ENCODE measurements at regions of chr19 and their contacts with region 1.

Region 1: DNA sequence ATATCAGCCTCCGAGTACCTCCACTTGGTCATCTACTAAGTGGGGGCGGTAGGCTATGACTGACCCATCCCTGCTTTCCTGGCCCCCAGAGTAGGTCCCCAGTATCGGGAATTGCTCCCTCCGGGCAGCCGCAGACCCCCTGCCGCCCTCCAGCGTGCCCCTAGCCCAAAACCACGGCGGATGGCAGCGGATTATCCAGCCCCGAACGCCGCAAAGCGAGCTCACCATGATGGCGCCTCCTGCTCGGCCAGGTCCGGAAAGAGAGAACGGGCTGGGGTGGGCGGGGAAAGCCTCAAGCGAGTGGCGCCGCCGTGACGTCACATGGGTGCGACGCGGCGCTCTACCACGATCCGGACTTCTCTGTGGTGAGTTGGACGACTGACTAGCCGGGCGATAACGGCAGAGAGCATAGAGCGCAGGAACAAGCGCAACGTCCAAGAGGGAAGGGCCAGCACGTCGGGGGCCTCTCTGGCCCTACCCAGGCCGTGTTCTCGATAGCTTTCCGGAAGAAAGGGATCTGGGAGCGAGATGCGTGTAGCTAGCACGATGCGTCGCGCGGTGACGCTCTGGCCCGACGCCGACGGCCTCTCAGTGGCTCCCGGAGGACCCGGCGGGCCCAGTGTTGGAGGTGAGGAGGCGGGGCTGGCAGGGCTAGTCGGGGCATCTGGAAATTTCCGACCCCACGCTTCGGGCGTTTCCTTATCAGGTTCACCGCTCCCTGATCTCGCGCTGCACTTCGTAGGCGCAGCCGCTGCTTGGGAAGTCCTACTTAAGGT is at the starts of genes RPL18 and SPHK2:
- DNase-seq: peak; percentile 99
- ATAC-seq: peak; percentile 78
- H3K4me3 ChIP-seq: peak within 1 kb of the TSS; percentile 56 to 93
- H3K27ac ChIP-seq: peak within 1 kb of the TSS; percentile 86
- H3K4me1 ChIP-seq: peaks cover 38 to 56% of the 10 kb centered on the region in 2 experiments
- H3K27me3 ChIP-seq: no peaks in the 10 kb centered on the region
- CTCF ChIP-seq: no peak
- POLR2A ChIP-seq: peak; percentile 86
- RAD21 ChIP-seq: no peak
- total RNA-seq, gene RPL18: 2,006 TPM
- total RNA-seq, gene SPHK2: 19.9 TPM

Region 2: DNA sequence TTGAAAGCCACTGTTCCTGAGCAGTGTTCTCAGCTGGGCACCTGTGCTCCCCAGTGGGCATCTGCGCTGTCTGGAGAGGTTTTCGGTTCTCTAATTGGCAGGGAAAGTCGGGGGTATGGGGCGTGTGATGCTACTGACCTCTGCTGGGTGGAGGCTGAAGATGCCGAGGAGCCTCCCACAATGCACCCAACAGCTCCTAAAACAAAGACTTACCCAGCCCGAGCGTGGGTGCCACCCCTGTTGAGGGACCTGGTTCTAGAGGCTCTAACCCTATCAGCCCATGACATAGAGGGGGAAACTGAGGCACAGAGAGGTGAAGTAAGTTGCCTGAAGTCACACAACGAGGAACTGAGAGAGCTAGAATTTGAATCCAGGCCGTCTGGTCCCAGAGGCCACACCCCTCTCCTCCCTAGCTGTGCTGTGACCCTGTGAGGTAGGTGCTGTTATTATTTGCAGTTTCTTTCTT is 10.3 kb before region 1 on chr19:
- CTCF ChIA-PET with region 1: interaction called, 9 read pairs
- POLR2A ChIA-PET with region 1: interaction called, 31 read pairs
- RAD21 ChIA-PET with region 1: no interaction called
- intact Hi-C with region 1: no loop called
- DNase-seq: peak; percentile 66
- ATAC-seq: peak; percentile 92
- H3K4me3 ChIP-seq: peak overlapping the region; percentile 22 to 50
- H3K27ac ChIP-seq: peak overlapping the region; percentile 10; the same call in 1 of the 2 replicates
- H3K4me1 ChIP-seq: peaks cover 5 to 13% of the 10 kb centered on the region in 2 experiments; a peak in 3 of 4 replicates
- H3K27me3 ChIP-seq: no peaks in the 10 kb centered on the region
- CTCF ChIP-seq: peak; percentile 77 to 80 (median 77)
- POLR2A ChIP-seq: no peak
- RAD21 ChIP-seq: peak; percentile 92

Region 3: GRCh38 chr19:48630296-48631063 is 11.4 kb after region 1 on chr19:
- CTCF ChIA-PET with region 1: interaction called, 4 read pairs
- POLR2A ChIA-PET with region 1: interaction called, 22 read pairs
- RAD21 ChIA-PET with region 1: interaction called, 3 read pairs
- intact Hi-C with region 1: no loop called
- DNase-seq: no peak
- ATAC-seq: peak; percentile 0; the same call in 1 of the 2 replicates
- H3K4me3 ChIP-seq: peak overlapping the region; percentile 15 to 32; a peak in 2 of 4 replicates
- H3K27ac ChIP-seq: peak overlapping the region; percentile 57
- H3K4me1 ChIP-seq: peaks cover 47 to 64% of the 10 kb centered on the region in 2 experiments
- H3K27me3 ChIP-seq: no peaks in the 10 kb centered on the region
- CTCF ChIP-seq: no peak
- POLR2A ChIP-seq: peak; percentile 77
- RAD21 ChIP-seq: no peak

Region 4: DNA sequence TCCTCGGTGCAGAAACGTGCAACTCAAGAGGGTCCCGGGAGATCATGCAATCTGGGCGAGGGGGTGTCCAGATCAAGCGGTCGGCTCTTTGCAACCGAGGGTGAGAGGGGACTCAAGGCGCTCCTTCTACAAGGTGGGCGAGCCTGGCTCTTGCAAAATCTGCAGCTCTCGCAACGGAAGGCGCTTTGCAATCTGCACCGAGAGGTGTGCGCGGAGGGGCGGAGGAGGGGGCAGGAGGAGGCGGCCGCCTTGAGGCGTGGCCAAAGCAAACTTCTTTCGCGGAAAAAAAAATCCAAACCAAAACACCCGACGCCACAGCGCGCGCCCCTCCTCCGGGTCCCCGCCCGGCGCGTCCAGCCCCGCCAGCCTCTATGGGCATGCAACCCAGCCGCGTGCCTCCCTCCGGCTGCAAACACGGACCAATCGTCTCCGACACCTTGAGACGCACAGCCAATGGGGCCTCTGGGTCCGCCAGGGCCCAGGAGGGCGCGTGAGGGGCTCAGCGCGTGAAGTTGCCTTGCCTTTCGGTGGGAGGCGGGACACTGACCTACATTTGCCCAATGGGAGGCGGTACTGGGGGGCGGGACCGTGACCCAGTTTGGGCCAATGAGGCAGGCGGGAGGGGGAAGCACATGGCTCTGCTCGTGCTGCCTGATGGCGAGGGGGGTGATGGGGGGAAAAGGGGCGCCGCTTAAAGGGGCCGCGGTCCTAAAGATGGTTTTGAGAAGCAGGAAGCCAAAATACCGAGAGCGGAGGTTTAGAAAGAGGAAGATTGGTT is 18.3 kb after region 1 on chr19 and contains the start of gene DBP:
- CTCF ChIA-PET with region 1: no interaction called
- POLR2A ChIA-PET with region 1: interaction called, 16 read pairs
- RAD21 ChIA-PET with region 1: interaction called, 3 read pairs
- intact Hi-C with region 1: no loop called
- DNase-seq: peak; percentile 99
- ATAC-seq: peak; percentile 72
- H3K4me3 ChIP-seq: peak within 1 kb of the TSS; percentile 57 to 83
- H3K27ac ChIP-seq: peak within 1 kb of the TSS; percentile 95
- H3K4me1 ChIP-seq: peaks cover 29 to 69% of the 10 kb centered on the region in 2 experiments
- H3K27me3 ChIP-seq: no peaks in the 10 kb centered on the region
- CTCF ChIP-seq: no peak; a peak in 1 of 6 replicates
- POLR2A ChIP-seq: no peak
- RAD21 ChIP-seq: no peak
- total RNA-seq, gene DBP: 45.9 TPM

Region 5: DNA sequence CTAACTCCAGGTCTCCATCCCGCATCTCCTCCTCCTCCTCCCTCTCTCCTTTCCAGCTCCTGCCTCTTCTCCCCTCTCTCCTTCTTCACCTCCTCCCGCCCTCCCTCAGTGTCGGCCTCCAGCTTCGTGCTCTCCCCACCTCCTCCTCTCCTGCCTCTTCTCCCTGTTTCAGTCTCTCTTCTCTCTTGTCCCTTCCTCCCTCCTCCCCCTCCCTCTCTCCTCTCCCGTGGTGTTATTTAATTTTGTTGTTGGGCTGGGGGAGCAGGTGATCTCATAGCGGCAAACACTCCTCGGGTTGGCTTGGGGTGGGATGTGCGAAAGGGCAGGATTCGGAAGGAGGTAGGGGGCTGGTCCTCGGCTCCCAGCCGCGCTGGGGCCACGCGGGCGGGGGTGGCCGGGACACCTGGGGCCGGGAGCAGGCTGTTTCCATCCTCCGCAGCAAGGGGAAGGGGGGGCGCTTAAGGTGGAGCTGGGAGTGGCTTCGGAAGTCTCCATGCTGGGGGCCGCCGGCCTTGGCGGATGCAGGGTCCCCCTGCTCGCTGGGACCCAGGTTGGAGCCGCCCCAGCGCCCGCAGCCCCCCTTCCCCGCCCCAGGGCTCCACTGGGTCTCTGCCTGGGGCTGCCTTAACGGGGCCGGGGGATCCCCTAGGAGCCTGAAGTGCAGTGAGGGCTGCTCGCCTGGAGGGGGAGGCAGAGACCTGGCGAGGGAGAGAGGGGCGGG is 27.1 kb after region 1 on chr19 and contains the start of gene CA11:
- CTCF ChIA-PET with region 1: interaction called, 6 read pairs
- POLR2A ChIA-PET with region 1: interaction called, 27 read pairs
- RAD21 ChIA-PET with region 1: no interaction called
- intact Hi-C with region 1: no loop called
- DNase-seq: peak; percentile 77
- ATAC-seq: peak; percentile 83
- H3K4me3 ChIP-seq: peak within 1 kb of the TSS; percentile 55 to 58
- H3K27ac ChIP-seq: peak within 1 kb of the TSS; percentile 83
- H3K4me1 ChIP-seq: peaks cover 19 to 52% of the 10 kb centered on the region in 2 experiments
- H3K27me3 ChIP-seq: no peaks in the 10 kb centered on the region
- CTCF ChIP-seq: peak in 2 of 3 experiments; percentile 83 to 91; a peak in 5 of 6 replicates
- POLR2A ChIP-seq: no peak
- RAD21 ChIP-seq: peak; percentile 95
- total RNA-seq, gene CA11: 29.6 TPM

Measured in HCT116 (cell line).